Vagina (tissue), 2 donors: ENCODE measurements at regions of chr4 and their contacts with region 1.

Region 1: DNA sequence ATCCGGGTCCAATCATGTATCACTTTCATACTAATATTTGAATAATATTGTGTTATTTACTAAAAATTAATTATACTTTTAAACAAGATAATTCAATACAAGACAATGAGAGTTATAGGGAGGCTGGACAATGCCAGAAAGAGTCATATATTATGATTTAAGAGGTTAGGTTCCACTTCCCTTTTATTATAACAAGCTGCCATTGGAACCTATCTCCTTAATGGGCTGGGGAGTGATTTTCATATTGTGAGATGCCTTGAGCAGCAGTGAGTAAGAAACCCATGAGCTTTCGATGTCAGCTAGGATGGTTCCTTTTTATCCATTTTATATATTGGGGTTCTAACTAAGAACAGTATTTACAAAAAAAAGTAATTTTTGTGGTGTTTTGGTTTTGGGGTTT is 91.8 kb downstream of the MAB21L2 start:
- DNase-seq: no peak
- H3K4me3 ChIP-seq: no peak overlapping the region
- H3K27ac ChIP-seq: no peak overlapping the region
- H3K4me1 ChIP-seq: no peaks in the 10 kb centered on the region
- H3K27me3 ChIP-seq: no peaks in the 10 kb centered on the region
- CTCF ChIP-seq: no peak
- POLR2A ChIP-seq: no peak

Region 2: GRCh38 chr4:149980941-149981340 is 692.9 kb before region 1 on chr4:
- intact Hi-C with region 1: loop called (anchors 5 kb)
- DNase-seq: no peak
- H3K4me3 ChIP-seq: no peak overlapping the region
- H3K27ac ChIP-seq: no peak overlapping the region
- H3K4me1 ChIP-seq: no peaks in the 10 kb centered on the region
- H3K27me3 ChIP-seq: no peaks in the 10 kb centered on the region
- CTCF ChIP-seq: peak; percentile 5 to 51 (median 36)
- POLR2A ChIP-seq: no peak

Region 3: DNA sequence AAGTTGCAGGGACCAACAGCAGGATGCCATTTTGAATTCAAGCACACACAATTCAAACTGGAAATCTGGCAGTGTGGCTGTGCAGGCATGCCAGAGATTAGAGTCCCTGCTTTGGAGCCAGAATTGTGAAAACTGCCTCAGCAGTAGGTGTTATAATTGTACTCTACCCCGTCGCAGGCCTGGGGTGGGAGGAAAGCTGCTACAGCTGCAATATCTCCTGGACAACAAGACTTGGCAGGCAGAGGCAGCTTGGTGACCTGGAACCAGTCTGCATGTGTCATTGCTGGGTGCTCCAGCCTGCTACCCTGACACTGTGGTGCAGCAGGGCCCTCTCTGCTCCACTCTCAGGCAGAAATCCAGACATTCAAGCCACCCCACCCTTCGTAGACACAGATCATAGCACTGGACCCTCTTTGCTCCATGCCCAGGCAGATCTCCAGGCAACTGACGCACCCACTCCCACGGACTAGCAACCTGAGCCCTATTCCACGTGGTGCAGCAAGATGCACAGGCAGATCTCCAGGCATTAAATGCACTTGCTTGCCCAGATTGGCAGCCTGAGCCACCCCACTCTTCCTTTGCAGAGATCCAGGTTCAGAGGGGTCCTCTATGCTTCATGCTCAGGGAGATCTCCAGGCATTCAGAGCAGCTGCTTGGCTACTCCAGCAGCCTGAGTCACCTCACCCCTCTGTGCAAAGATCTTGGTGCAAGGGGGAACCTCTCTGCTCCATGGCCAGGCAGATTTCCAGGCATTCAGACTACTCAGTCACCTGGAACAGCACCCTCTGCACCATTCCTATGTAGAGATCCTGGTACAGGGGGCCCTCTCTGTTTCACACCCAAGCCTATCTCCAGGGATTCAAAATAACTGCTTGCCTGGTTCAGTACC is 200.8 kb after region 1 on chr4:
- intact Hi-C with region 1: no loop called
- DNase-seq: no peak
- H3K4me3 ChIP-seq: no peak overlapping the region
- H3K27ac ChIP-seq: no peak overlapping the region
- H3K4me1 ChIP-seq: no peaks in the 10 kb centered on the region
- H3K27me3 ChIP-seq: no peaks in the 10 kb centered on the region
- CTCF ChIP-seq: no peak
- POLR2A ChIP-seq: no peak